Natural killer cell (primary cell): ENCODE measurements at regions of chr11 and their contacts with region 1.

Region 1: DNA sequence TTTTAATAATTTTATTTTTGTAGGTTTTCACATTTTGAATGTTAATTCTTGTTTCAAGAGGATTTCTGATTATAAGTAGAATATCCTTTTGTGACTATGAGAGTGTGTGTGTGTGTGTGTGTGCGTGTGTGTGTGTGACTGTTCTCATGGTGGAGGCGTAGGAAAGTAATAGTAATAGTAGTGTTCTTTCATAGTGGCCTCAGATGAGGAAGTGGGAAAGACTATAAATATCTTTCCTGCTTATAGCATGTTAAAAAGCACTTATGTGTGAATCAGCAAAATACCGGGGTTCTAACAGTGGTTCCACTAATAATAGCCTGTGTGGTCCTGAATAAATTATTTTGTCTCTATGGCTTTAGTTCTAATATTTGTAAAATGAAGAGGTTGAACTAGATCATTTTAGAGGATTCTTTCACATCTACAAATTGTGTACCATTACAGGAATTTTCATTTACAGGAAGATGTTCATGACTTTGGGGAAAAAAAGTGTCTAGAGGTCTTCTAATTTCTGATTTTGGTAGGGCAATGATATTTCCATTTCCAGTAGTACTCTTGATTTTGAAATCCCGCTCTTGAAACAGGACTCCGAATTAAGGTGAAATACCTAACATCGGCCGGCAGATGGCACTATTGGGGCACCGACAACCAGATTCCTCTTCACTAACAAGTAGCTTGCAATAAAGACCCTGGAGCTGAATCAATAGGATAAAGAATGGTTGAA is 29.9 kb upstream of the OR10G7 start:
- DNase-seq: peak; percentile 50 to 80
- ATAC-seq: peak in 1 of 3 donors; percentile 58
- H3K4me3 ChIP-seq: no peak overlapping the region
- H3K4me3 Mint-ChIP-seq: no peak overlapping the region
- H3K27ac ChIP-seq: no peak overlapping the region
- H3K27ac Mint-ChIP-seq: no peak overlapping the region
- H3K4me1 ChIP-seq: peaks cover 18% of the 10 kb centered on the region
- H3K4me1 Mint-ChIP-seq: peaks cover 7 to 13% of the 10 kb centered on the region in 2 donors
- H3K27me3 ChIP-seq: peaks cover 1% of the 10 kb centered on the region
- H3K27me3 Mint-ChIP-seq: peaks cover 25 to 50% of the 10 kb centered on the region in 2 donors
- CTCF ChIP-seq: peak; percentile 90

Region 2: GRCh38 chr11:124194698-124195410 is 123.8 kb after region 1 on chr11:
- intact Hi-C with region 1: loop called (anchors 1 kb)
- DNase-seq: peak in 1 of 2 donors; percentile 65
- ATAC-seq: peak; percentile 53 to 73 (median 67)
- H3K4me3 ChIP-seq: no peak overlapping the region
- H3K4me3 Mint-ChIP-seq: no peak overlapping the region
- H3K27ac ChIP-seq: no peak overlapping the region
- H3K27ac Mint-ChIP-seq: no peak overlapping the region
- H3K4me1 ChIP-seq: no peaks in the 10 kb centered on the region
- H3K4me1 Mint-ChIP-seq: no peaks in the 10 kb centered on the region
- H3K27me3 ChIP-seq: no peaks in the 10 kb centered on the region
- H3K27me3 Mint-ChIP-seq: peaks cover 0 to 14% of the 10 kb centered on the region in 2 donors
- CTCF ChIP-seq: peak; percentile 58

Region 3: DNA sequence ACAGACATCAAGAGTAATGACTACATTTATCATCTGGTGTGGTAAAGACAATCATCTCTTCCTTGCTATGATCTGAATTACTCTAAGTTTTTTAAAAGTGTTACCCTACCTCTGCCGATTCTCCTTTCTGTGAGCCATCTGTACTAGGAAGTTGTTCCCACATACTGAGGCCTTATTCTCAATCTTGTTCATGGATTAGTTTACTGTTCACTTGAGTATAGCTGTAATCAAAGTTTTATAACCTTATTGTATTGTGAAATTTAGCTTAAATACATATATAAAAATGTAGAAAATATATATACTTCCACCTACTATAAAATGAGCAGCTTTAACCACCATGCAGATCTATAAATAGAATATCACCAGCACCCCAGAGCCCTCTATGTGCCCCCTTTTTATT is 251.3 kb after region 1 on chr11:
- intact Hi-C with region 1: no loop called
- DNase-seq: no peak
- ATAC-seq: no peak
- H3K4me3 ChIP-seq: no peak overlapping the region
- H3K4me3 Mint-ChIP-seq: no peak overlapping the region
- H3K27ac ChIP-seq: no peak overlapping the region
- H3K27ac Mint-ChIP-seq: no peak overlapping the region
- H3K4me1 ChIP-seq: peaks cover 3% of the 10 kb centered on the region
- H3K4me1 Mint-ChIP-seq: peaks cover 0 to 15% of the 10 kb centered on the region in 2 donors
- H3K27me3 ChIP-seq: no peaks in the 10 kb centered on the region
- H3K27me3 Mint-ChIP-seq: peaks cover 2 to 7% of the 10 kb centered on the region in 2 donors
- CTCF ChIP-seq: no peak